Activated naive CD4-positive, alpha-beta T cell treated with anti-CD3 and anti-CD28 coated beads for 36 hours (primary cell): ENCODE measurements at regions of chr19 and their contacts with region 1.

Region 1: DNA sequence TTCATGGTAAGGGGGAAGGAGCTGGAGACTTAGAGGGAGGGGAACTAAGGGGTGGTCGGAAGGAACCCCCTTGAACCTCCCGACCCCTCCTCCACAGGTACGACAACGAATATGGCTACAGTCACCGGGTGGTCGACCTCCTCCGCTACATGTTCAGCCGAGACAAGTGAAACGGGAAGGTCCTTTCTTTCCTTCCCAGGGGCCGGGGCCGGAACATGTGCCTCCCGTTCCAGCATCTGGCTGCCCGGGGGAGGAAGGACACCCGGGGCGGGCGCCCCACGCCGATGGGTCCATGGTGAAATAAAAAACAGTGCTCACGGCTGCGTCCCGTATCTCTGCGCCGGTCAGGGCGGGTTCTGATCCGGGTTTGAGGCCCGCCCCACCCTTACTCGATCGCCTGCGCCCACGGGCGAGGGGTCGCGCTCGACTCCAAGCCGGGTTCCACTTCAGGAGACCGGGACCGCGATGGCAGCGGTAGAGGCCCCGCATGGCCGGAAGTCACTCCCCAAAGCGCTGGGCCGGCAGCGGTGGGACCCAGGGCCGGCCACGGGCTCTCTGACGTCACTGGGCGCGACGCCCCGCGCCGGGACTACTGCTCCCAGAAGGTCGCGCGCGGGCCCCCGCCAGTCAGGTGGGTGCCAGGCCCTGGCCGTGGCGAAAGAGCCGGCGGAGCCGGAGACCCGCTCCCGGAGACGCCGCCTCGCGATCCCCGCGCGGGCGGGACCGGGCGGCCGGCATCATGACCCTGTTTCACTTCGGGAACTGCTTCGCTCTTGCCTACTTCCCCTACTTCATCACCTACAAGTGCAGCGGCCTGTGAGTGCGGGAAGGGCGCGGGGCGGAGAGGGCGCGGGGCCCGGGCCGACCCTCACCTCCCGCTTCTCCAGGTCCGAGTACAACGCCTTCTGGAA is at the start of gene TMEM147:
- DNase-seq: peak; percentile 85
- H3K4me3 Mint-ChIP-seq: peak within 1 kb of the TSS; percentile 87
- H3K27ac Mint-ChIP-seq: peak within 1 kb of the TSS; percentile 90
- H3K4me1 Mint-ChIP-seq: peaks cover 38% of the 10 kb centered on the region
- H3K27me3 Mint-ChIP-seq: no peaks in the 10 kb centered on the region
- total RNA-seq, gene TMEM147: 63.1 to 63.4 TPM

Region 2: DNA sequence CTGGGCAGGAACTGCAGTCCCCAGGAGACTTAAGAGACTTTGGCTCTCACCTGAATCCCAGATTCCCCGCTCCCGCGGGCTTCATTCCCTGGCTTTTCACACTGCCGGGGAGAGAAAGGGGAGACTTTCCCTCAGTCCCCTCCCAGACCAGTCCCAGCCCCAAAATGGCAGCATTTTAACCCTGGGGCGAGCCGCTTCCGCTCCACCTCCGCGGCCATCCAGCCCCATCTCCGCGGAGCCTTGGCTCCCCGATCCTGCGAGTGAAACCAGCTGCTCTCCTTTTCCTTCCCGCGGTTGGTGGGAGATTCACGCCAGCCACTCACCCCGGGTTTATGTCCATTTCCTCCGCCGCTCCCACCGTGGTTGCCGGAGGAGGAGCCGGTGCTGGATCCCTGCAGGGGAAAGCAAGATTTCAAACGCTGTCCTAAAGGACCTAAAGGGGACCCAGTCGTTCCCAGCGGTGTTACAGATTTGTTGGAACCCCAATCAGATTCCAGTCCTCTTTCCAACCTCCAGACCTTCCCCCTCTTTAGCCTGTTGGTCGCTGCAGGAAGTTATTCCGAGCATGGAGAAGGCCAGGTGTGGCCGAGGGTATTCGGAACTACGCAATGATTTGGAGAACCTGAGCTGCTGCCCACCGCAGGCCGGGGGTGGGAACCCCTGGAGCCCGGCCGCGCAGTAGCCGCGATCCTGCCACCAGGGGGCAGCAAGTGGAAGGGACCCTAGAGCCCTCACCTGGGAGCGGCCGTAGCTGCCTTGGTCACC is 35.2 kb before region 1 on chr19:
- CTCF ChIA-PET with region 1: interaction called, 12 read pairs
- intact Hi-C with region 1: loop called (anchors 1 kb)
- DNase-seq: peak; percentile 80
- H3K4me3 Mint-ChIP-seq: peak overlapping the region; percentile 57
- H3K27ac Mint-ChIP-seq: no peak overlapping the region
- H3K4me1 Mint-ChIP-seq: peaks cover 15% of the 10 kb centered on the region
- H3K27me3 Mint-ChIP-seq: peaks cover 36% of the 10 kb centered on the region

Region 3: DNA sequence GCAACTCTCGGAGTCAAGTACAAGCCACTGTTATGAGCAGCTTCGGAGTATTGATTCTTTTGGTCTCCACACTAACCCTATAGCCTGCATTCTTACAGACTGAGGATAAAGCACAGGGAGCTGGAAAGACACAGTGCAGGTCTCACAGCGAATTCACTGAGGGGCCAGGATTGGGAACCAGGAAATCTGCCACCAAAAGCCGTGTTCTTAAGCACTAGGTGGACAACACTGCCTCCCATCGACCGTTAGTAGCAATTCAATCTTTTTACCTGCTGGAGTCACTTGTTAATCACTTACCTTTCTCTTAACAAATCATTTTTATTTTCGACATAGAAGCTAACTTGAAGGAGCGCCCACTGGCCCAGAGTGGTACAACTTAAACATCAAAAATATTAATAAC is 47.0 kb after region 1 on chr19:
- CTCF ChIA-PET with region 1: interaction called, 26 read pairs
- intact Hi-C with region 1: loop called (anchors 1 kb)
- DNase-seq: peak; percentile 35
- H3K4me3 Mint-ChIP-seq: no peak overlapping the region
- H3K27ac Mint-ChIP-seq: no peak overlapping the region
- H3K4me1 Mint-ChIP-seq: peaks cover 3% of the 10 kb centered on the region
- H3K27me3 Mint-ChIP-seq: no peaks in the 10 kb centered on the region

Region 4: DNA sequence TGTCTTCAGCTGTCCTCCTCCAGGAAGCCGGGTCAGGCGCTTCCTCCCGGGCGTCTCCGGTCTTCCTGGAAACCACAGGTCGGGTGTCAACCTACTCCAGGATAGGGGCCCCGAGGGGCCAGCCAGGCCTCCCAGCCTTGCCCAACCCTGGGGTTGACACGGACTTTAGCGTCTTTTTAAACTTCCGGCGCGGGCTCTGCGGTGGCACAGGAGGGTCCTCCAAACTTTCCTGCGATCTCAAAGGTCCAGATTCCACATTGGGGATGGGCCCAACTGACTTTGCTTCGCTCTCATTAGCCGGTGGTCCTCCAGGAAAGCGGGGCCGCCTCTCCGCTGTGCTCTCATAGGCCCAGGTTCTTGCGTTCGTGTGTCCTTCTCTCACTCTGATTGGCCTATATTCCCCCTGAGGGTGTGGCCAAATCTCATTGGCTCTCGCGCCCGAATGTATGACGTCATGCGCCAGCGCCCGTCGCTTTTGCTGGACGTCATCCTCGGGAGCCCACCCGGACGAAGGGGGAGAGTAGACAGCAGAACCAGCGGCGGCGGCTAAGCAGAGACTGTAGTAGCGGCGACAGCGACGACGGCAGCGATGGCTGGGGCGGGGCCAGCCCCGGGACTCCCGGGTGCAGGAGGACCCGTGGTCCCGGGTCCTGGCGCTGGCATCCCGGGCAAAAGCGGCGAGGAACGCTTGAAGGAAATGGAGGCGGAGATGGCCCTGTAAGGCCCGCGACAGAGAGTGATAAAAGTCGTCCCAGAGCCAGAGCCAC is 83.5 kb after region 1 on chr19 and contains the start of gene RBM42:
- CTCF ChIA-PET with region 1: interaction called, 3 read pairs
- intact Hi-C with region 1: loop called (anchors 1 kb)
- DNase-seq: peak; percentile 97
- H3K4me3 Mint-ChIP-seq: peak within 1 kb of the TSS; percentile 100
- H3K27ac Mint-ChIP-seq: peak within 1 kb of the TSS; percentile 95
- H3K4me1 Mint-ChIP-seq: peaks cover 19% of the 10 kb centered on the region
- H3K27me3 Mint-ChIP-seq: no peaks in the 10 kb centered on the region
- total RNA-seq, gene RBM42: 64.2 to 66.2 TPM

Region 5: DNA sequence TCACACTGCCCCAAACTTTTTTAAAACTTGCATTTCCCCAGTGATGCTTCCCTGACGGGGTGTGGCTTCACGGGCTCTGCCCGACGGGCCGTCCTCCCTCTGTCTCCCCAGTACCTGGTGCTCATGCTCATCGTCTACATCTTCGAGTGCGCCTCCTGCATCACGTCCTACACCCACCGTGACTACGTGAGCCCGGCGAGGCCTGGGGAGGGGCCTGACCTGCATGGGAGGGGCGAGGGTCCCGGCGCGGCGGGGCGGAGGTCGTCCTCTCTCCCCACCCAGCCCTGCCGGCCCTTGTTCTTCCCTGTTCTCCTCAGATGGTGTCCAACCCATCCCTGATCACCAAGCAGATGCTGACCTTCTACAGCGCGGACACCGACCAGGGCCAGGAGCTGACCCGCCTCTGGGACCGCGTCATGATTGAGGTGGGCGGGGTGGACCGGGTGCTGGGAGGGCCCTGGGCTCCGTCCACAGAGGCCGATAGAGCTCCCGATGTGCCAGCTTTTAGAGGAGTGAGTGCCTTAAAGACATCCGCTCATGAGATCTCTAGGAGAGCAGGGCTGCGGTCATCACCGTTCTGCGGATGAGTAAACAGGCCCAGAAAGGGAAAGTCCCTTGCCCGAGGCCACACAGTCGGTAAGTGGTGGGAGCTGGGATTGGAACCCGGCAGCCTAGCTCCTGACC is 128.0 kb after region 1 on chr19:
- CTCF ChIA-PET with region 1: no interaction called
- intact Hi-C with region 1: loop called (anchors 5 kb)
- DNase-seq: peak; percentile 80
- H3K4me3 Mint-ChIP-seq: peak overlapping the region; percentile 47
- H3K27ac Mint-ChIP-seq: no peak overlapping the region
- H3K4me1 Mint-ChIP-seq: peaks cover 5% of the 10 kb centered on the region
- H3K27me3 Mint-ChIP-seq: peaks cover 25% of the 10 kb centered on the region

Region 6: GRCh38 chr19:35710784-35711723 is 165.8 kb after region 1 on chr19:
- CTCF ChIA-PET with region 1: interaction called, 4 read pairs
- intact Hi-C with region 1: loop called (anchors 1 kb)
- DNase-seq: peak; percentile 87
- H3K4me3 Mint-ChIP-seq: peak overlapping the region; percentile 52
- H3K27ac Mint-ChIP-seq: peak overlapping the region; percentile 100
- H3K4me1 Mint-ChIP-seq: peaks cover 44% of the 10 kb centered on the region
- H3K27me3 Mint-ChIP-seq: no peaks in the 10 kb centered on the region